Tibial artery (tissue), 4 donors: ENCODE measurements at regions of chr6 and their contacts with region 1.

Region 1: DNA sequence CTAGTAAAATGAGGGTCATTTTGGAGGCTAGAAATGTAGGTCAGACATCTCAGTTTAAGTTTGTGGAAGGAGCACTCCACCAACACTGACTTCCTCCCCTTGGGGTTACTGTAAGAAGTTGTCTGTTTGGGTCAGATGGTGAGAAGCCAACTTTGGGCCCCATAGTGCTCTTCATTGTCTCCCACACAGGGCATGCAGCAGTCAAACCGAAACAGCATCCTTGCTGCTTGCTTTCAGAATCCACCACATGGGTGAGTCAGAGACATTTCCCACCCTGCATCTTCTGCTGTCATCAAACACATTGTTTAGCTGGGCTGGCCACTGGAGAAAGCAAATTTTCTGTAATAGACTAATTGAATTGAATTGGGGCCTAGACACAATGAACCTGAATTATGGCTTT is 16.8 kb downstream of the IL17F start:
- DNase-seq: no peak
- H3K4me3 ChIP-seq: no peak overlapping the region
- H3K27ac ChIP-seq: no peak overlapping the region
- H3K4me1 ChIP-seq: no peaks in the 10 kb centered on the region
- H3K27me3 ChIP-seq: no peaks in the 10 kb centered on the region
- CTCF ChIP-seq: no peak

Region 2: DNA sequence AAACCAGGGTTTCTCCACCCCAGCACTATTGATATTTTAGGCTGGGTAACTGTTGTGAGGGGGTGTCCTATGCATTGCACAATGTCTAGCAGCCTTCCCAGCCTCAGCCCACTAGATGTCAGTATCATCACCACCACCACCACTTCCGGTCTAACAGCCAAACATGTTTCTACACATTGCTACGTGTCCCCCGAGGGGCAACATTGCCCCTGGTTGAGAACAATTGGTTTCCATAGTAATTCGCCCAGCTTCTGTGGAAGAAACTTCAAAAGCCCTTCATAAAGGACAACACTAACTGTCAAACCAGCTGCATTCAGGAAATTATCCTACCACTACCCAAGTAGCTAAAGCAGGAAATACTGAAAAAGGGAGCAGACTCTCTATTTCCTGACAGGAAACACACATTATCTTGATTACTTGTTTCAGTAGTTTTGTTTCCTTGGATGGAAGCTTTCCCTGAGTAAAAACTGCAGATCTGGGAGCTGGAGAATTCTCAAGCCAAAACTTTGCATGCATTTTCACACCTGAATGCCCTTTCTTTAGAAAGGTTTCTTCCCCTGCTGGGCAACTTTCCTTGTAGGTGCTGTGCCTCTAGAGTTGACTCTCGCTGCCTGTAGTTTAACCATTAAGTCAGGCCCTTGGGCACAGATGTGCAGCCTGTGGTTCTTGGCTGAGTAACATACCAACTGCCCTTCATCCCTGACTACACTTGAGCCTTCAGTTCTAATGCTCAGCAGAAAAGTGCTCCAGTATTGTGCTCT is 163.7 kb before region 1 on chr6:
- intact Hi-C with region 1: loop called (anchors 10 kb)
- DNase-seq: no peak
- H3K4me3 ChIP-seq: no peak overlapping the region
- H3K27ac ChIP-seq: no peak overlapping the region
- H3K4me1 ChIP-seq: no peaks in the 10 kb centered on the region
- H3K27me3 ChIP-seq: no peaks in the 10 kb centered on the region
- CTCF ChIP-seq: no peak